B cell (primary cell): ENCODE measurements at regions of chr14 and their contacts with region 1.

Region 1: DNA sequence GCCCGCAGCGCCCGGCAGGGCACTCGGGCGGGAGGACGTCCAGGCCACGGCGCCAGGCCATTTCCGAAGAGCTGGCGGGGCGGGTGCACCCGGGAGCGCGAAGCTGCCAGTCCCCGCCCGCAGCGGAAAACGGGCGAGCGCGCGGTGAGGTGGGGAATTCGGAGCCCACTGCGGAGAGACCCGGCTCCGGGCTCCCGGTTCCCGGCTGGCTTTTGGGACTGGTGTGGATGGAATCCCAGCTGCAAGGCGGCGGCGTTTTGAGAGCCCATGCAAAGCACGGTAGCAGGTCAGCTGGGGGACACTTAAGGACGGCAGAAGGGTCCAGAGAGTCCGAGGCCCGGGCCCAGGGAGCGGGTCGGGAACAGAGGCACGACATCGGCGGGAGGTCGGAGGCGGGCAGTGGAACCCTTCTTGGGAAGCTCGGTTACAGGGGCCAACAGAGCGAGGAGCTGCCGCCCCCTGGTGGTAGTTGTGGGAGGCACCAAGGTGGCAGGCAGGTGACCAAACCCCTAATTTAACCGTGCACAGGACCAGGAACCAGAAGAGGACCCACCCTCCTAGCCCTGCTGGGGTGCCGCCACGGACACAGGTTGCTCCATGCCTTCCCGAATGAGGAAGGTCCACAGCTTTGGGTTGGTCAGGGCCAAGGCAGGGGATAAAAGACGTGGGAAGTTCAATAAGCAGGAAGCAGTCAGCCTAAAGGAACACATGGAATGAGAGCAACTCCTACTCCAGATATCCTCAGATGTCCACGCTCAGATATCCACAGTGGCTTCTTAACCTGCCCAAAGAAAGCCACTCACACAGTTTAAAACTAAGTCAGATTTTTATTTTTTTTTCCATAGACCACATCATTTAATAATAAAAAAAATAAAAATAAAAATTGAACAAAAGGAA is 685 bp upstream of the CDH24 start:
- DNase-seq: peak; percentile 89
- ATAC-seq: peak; percentile 64
- H3K4me3 ChIP-seq: peak overlapping the region; percentile 11 to 91 (median 68)
- H3K4me3 Mint-ChIP-seq: peak overlapping the region; percentile 95
- H3K27ac ChIP-seq: no peak overlapping the region
- H3K27ac Mint-ChIP-seq: peak overlapping the region; percentile 76
- H3K4me1 ChIP-seq: peaks cover 10 to 21% of the 10 kb centered on the region in 2 donors
- H3K4me1 Mint-ChIP-seq: peaks cover 18% of the 10 kb centered on the region
- H3K27me3 ChIP-seq: peaks cover 0 to 6% (median 0%) of the 10 kb centered on the region in 4 experiments
- H3K27me3 Mint-ChIP-seq: no peaks in the 10 kb centered on the region
- CTCF ChIP-seq: peak; percentile 95

Region 2: DNA sequence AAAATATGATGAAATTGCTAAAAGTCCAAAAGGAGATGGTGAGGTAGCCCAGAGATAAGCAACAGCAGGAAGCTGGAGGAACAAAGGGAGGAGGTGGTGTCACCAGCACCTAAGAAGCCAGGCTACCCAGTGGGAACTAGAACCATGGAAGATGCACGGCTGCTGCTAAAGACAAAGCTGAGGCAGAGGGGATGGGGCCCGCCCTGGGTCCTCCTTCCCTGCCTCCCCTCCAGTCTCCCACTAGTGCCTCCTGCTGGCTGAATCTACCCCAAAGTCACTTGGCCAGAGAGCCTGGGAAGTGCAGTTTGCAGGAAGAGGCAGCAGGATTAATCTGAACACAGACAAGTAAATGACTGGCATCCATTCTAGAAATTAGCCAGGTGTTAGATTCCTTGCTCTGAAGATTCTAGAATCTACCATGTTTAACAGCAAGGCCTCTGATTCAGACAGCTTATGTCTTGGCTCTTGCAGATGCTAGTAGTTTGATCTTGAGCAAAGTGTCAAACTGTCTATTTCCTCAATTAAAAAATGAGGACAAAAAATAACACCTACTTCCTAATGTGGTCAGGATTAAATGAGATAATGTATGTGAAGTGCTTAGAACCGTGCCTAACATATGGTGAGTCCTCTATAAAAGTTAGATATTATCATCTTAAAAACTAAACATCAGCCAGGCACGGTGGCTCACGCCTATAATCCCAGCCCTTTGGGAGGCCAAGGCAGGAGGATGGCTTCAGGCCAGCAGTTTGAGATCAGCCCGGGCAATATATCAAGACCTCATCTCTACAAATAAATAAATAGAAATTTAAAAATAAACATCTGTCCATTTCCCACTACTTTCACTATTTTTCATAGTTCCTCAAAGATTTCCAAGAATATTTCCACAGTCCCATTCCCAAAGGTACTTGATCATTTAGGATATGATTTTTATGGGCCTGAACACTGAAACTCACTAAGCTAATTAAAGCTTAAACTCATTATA is 192.3 kb before region 1 on chr14:
- CTCF ChIA-PET with region 1: no interaction called
- POLR2A ChIA-PET with region 1: no interaction called
- intact Hi-C with region 1: no loop called
- DNase-seq: no peak
- ATAC-seq: no peak
- H3K4me3 ChIP-seq: no peak overlapping the region
- H3K4me3 Mint-ChIP-seq: no peak overlapping the region
- H3K27ac ChIP-seq: no peak overlapping the region
- H3K27ac Mint-ChIP-seq: no peak overlapping the region
- H3K4me1 ChIP-seq: peaks cover 7 to 12% of the 10 kb centered on the region in 2 donors
- H3K4me1 Mint-ChIP-seq: peaks cover 4% of the 10 kb centered on the region
- H3K27me3 ChIP-seq: peaks cover 0 to 3% (median 0%) of the 10 kb centered on the region in 4 experiments
- H3K27me3 Mint-ChIP-seq: no peaks in the 10 kb centered on the region
- CTCF ChIP-seq: no peak

Region 3: DNA sequence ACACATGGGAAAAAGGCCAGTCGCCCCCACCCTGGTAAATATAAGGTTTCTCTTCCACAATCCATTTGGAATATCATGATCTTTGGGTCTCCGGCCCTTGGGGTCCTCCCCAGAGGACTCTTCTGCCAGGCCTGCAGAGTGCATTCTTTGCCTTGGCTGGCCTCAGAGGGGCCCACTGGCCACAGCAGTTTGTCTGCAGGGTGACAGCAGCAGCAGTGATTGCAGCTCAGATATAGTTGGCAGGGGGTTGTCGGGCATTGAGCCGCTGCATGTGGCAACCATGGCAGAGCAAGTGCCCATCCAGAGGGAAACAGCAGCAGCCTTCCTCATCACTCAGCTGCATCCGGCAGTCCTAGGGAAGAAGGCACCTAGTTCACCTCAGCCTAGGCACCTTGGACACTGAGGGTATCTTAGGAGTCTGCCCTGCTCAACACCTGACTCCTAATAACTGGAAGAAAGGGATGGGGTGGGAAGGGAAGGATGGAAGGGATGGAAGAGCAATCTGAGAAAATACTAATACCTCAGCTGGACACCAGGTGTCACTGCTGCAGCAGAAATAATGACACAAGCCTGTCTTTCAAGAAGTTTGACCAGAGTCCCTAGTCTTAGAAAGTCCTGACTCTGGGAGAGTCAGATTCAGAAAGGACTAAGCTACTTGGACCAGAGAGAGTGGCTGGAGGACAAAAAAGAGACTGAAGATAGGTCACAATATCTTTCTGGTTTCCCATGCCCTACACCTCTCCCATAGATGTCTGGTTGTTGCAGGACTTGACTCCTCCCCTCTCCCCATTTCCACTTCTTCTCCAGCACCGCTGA is 84.6 kb before region 1 on chr14:
- CTCF ChIA-PET with region 1: interaction called, 1,134 read pairs
- POLR2A ChIA-PET with region 1: interaction called, 3 read pairs
- intact Hi-C with region 1: loop called (anchors 1 kb)
- DNase-seq: peak; percentile 69
- ATAC-seq: peak; percentile 54
- H3K4me3 ChIP-seq: no peak overlapping the region
- H3K4me3 Mint-ChIP-seq: no peak overlapping the region
- H3K27ac ChIP-seq: no peak overlapping the region
- H3K27ac Mint-ChIP-seq: no peak overlapping the region
- H3K4me1 ChIP-seq: peaks cover 0 to 5% of the 10 kb centered on the region in 2 donors
- H3K4me1 Mint-ChIP-seq: peaks cover 4% of the 10 kb centered on the region
- H3K27me3 ChIP-seq: peaks cover 0 to 5% (median 2%) of the 10 kb centered on the region in 4 experiments
- H3K27me3 Mint-ChIP-seq: peaks cover 15% of the 10 kb centered on the region
- CTCF ChIP-seq: peak; percentile 79

Region 4: DNA sequence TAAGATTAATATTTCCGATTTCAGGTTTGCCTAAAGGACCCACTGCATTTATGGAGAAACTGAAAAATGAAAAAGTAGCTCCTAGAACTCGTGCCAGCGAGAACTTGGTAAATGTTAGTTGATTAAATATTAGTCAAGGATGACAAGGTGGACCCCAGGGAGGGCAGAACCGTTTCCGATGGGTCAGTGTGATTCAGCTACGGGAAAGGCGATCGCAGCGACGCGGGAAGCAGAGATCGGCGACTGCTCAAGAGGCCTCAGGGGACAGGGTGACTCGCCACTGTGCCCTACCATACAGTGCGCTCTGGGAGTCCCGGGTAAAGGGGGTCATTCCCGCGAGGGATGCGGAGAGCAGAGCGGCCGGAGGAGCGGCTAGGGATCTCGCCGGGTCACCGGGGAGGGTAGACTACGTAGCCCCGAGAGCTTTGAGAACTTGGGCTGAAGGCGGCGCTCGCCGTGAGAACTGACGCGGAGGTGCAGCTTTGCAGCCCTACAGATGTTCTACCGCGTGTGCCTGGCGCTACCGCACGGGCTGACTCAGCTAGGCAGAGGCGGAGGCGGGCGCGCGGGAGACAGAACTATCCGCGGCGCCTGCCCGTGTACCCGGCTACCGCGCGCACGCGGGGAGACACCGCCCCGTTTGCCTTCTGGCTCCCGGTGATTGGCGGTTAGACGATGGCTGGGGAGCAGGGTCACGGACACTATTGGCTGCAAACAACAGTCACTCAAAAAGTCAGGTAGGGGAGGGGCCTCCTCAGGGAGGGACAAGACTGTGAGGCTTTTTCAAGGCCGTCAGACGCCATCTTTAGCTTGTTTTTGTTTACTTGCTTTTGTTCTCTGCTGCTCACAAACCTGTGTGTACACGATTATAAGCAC is 51.2 kb before region 1 on chr14:
- CTCF ChIA-PET with region 1: interaction called, 1,134 read pairs
- POLR2A ChIA-PET with region 1: no interaction called
- intact Hi-C with region 1: loop called (anchors 5 kb)
- DNase-seq: peak; percentile 98
- ATAC-seq: peak; percentile 91
- H3K4me3 ChIP-seq: peak overlapping the region; percentile 70 to 95 (median 85)
- H3K4me3 Mint-ChIP-seq: peak overlapping the region; percentile 99
- H3K27ac ChIP-seq: peak overlapping the region; percentile 75 to 88
- H3K27ac Mint-ChIP-seq: peak overlapping the region; percentile 98
- H3K4me1 ChIP-seq: peaks cover 24 to 32% of the 10 kb centered on the region in 2 donors
- H3K4me1 Mint-ChIP-seq: peaks cover 42% of the 10 kb centered on the region
- H3K27me3 ChIP-seq: no peaks in the 10 kb centered on the region
- H3K27me3 Mint-ChIP-seq: no peaks in the 10 kb centered on the region
- CTCF ChIP-seq: no peak

Region 5: GRCh38 chr14:23034483-23035302 is 23.3 kb before region 1 on chr14 and contains the start of gene PSMB5:
- CTCF ChIA-PET with region 1: interaction called, 9 read pairs
- POLR2A ChIA-PET with region 1: no interaction called
- intact Hi-C with region 1: loop called (anchors 1 kb)
- DNase-seq: peak; percentile 96
- ATAC-seq: peak; percentile 92
- H3K4me3 ChIP-seq: peak within 1 kb of the TSS; percentile 62 to 100 (median 66)
- H3K4me3 Mint-ChIP-seq: peak within 1 kb of the TSS; percentile 86
- H3K27ac ChIP-seq: peak within 1 kb of the TSS; percentile 81 to 93
- H3K27ac Mint-ChIP-seq: peak within 1 kb of the TSS; percentile 93
- H3K4me1 ChIP-seq: peaks cover 14 to 20% of the 10 kb centered on the region in 2 donors
- H3K4me1 Mint-ChIP-seq: peaks cover 28% of the 10 kb centered on the region
- H3K27me3 ChIP-seq: no peaks in the 10 kb centered on the region
- H3K27me3 Mint-ChIP-seq: no peaks in the 10 kb centered on the region
- CTCF ChIP-seq: no peak
- total RNA-seq, gene PSMB5: 29.0 and 31.9 TPM in 2 replicates

Region 6: GRCh38 chr14:23076785-23077408 is 18.9 kb after region 1 on chr14:
- CTCF ChIA-PET with region 1: interaction called, 33 read pairs
- POLR2A ChIA-PET with region 1: interaction called, 4 read pairs
- intact Hi-C with region 1: no loop called
- DNase-seq: peak; percentile 62
- ATAC-seq: peak; percentile 66
- H3K4me3 ChIP-seq: no peak overlapping the region
- H3K4me3 Mint-ChIP-seq: no peak overlapping the region
- H3K27ac ChIP-seq: no peak overlapping the region
- H3K27ac Mint-ChIP-seq: no peak overlapping the region
- H3K4me1 ChIP-seq: peaks cover 2 to 4% of the 10 kb centered on the region in 2 donors
- H3K4me1 Mint-ChIP-seq: peaks cover 9% of the 10 kb centered on the region
- H3K27me3 ChIP-seq: no peaks in the 10 kb centered on the region
- H3K27me3 Mint-ChIP-seq: no peaks in the 10 kb centered on the region
- CTCF ChIP-seq: peak; percentile 83